ENCODE measurements at regions of chr19 and their contacts with region 1.

Region 1: DNA sequence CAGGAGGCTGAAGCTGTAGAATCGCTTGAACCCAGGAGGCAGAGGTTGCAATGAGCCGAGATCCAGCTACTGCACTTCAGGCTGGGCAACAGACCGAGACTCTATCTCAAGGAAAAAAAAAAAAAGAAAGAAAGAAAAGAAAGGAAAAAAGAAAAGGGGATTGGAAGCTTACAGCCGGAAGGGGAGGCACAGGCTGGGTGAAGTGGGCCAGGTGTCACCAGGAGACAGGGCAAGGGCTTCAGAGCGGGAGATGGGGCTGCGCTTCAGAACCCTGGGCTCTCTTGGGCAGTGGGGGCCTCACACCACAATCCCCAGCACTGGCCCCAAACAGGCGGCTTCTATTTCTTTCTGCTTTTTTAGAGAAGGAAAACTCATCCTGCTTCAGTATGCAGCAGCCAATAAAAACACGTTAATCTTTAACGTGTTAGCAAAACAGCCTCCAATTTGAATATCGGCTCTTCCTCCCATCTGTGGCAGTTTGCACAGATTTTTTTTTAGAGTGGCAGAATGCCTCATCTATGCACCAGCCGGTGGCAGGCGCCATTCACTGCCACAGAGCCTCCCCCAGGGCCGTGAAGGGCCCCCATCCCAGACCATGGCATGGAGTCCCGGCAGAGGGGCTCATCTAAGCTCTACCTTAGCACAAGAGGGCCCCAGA is 46.6 kb upstream of the C19orf12 start:
- DNase-seq: no peak
- ATAC-seq: no peak

Region 2: DNA sequence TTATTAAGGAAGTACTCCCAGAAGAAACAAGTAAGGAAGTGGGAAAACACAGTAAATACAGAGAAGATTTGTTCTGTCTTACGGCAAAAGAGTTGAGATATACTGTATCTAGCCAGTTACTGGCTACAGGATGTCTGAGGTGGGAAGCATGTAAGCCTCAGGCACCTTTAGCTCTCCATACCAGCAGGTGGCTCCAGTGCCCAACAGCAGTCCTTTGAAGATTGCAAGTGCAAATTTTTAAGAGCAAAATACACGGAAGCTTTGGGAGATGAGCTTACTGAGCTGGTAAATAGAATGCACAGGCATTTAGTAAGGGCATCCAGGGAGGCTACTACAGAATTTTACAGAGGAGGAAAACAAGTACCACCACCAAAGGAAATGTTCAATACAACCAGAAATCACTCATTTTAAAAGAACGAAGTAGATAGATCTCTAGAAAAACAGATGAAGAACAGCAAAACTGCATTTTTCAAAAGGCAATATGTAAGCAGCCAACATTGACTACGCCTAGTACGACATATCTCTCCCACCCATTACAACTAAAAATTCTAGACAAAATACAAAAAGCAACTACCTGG is 293.8 kb before region 1 on chr19:
- intact Hi-C with region 1: no loop called
- DNase-seq: no peak
- ATAC-seq: no peak

Region 3: GRCh38 chr19:29610563-29611271 is 151.0 kb before region 1 on chr19:
- intact Hi-C with region 1: no loop called
- DNase-seq: peak; percentile 88
- ATAC-seq: peak; percentile 82

Region 4: DNA sequence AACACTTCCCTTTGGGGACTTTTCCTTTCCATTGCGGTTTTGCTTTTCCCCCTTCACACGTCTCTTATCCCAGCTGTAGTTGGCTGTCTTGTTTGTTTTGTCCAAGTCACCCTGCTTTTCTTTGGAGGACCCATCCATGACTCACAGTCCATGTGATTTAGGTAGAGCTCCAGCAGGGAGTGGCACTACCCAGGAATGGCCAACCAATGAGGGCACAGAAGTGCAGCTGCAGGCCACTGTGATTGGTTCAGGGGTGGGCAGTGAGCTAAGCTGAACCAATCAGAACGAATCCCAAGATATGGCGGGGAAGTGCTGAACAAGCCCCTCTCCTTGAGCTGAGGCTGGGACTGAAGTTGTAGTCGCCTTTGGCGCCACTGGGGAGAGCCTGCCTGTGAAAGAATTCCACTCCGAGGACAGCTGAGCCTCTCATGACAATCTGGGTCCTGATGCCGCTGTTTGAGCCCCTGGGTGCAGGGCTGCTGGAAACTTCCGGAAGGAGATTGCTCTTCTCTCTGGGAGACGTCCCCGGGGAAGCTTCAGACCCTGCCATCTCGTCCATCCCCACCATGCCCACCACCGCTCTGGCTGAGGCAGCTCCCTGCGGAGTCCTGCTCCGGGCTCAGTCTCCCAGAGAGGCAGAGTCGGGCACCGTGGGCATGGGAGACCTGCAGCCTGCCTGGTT is 117.4 kb after region 1 on chr19:
- intact Hi-C with region 1: loop called (anchors 5 kb)
- DNase-seq: no peak
- ATAC-seq: peak; percentile 46

Measured in Right ventricle myocardium superior (tissue), 1 donor.